BJ (cell line): ENCODE measurements at regions of chr11 and their contacts with region 1.

Region 1: DNA sequence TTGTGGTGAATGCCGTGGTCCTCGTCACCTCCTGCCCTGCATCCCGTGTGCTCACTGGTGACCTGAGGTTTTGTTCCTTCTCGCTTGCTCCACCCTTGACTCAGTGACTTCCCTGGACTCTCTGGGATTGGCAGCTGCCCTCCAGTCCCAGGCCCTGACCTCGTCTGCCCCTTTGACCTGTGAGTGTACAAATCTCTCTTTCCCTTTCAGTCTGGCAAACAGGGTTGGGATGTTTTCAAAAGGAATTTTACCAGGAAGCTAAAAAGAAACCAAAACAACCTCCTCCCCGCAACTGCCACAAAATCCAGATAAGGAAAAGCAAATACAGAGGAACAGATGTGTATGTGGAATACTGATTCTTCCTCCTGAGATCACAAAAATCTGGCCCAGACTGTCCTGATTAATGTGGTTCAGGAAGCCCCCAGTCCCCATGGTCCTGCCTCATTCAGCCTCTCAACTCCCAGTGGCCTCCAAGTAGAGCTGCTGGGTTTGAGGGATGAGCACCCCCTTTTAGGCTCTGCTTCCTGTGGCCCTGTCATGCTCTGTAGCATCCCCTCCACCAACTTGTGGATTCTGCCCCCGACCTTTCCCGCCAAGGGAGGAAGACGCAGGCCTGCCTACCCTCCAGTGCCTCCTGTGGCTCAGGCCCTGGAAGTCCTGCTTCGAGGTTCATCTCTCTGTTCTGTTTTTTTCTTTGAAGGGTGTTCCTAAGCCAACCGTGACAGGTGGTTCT is 15.2 kb downstream of the ROBO4 start:
- DNase-seq: no peak
- H3K4me3 ChIP-seq: no peak overlapping the region
- H3K27me3 ChIP-seq: no peaks in the 10 kb centered on the region
- CTCF ChIP-seq: no peak

Region 2: DNA sequence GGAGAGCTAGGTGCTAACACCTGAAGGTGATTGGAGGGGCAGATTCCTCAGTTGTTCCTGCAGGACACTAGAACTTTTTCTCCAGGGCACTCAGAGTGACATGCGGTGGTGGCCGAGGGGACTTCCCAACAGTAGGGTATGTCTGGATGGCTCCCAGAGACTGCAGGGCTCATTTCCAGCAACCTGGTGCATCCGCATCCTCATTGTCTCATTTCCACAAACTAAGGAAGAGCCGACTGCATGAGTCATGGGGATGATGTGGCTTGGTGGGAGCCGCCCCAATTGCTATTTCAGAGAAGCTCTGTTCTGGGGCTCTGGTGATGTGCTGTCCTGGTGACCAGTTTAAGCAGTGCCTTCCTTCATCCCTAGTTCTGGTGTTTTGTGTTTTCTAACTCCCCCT is 18.0 kb after region 1 on chr11:
- CTCF ChIA-PET with region 1: interaction called, 10 read pairs
- POLR2A ChIA-PET with region 1: no interaction called
- DNase-seq: peak; percentile 73
- H3K4me3 ChIP-seq: no peak overlapping the region
- H3K27me3 ChIP-seq: no peaks in the 10 kb centered on the region
- CTCF ChIP-seq: no peak